Activated T-helper 1 cell treated with anti-CD3 and anti-CD28 coated beads, Interleukin-12 subunit alpha, Interleukin-12 subunit beta, Interleukin-2, Interleukin-4 antibody, amounts not matched to agents 30 ng/mL and 10 ng/mL and 1 ng/mL, durations not matched to agents 14 hours and 24 hours and 36 hours (primary cell): ENCODE measurements at regions of chr20 and their contacts with region 1.

Region 1: DNA sequence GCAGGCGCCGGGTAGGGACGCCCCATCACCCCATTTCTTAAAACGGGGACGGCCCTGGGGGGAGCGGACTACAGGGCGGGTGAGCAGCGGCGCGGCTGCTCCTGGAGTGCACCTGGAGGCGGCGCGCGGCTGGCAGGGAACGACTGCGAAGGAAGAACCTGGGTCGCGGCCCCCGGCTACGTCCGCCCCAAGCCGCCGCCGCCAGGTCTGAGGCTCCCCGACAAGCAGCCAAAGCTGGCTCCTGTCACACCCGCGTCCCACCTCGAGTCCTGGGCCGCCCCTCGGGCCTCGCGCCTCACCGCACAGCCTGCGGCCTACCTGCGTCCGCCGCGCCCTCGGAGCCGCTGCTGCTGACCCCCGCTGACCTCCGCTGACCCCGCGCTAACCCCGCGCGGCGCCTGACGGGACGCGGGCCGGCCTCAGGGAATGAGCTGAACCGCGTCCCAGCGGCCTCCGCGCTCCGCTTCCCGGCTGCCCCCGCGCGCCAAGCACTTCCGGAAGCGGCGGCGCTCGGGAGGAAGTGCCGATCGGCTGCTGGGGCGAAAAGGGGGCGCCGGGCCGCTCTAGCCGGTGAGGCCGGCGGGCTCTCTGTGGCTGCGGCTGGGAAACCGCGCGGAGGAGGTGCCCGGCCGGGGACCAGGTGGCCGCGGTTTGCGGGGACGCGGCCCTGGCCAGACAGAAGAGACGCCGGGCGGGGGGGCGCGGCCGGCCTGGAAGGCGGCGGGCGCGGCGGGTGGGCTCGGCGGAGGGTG is at the starts of genes ARFRP1 and ZGPAT:
- DNase-seq: peak; percentile 88
- H3K4me3 Mint-ChIP-seq: peak within 1 kb of the TSS; percentile 94
- H3K27ac Mint-ChIP-seq: peak within 1 kb of the TSS; percentile 86
- H3K4me1 Mint-ChIP-seq: peaks cover 31% of the 10 kb centered on the region
- H3K27me3 Mint-ChIP-seq: no peaks in the 10 kb centered on the region
- total RNA-seq, gene ARFRP1: 71.8 and 73.5 TPM in 2 replicates
- total RNA-seq, gene ZGPAT: 34.5 and 36.7 TPM in 2 replicates

Region 2: GRCh38 chr20:63657937-63658748 is 49.6 kb before region 1 on chr20 and contains the start of gene RTEL1:
- intact Hi-C with region 1: loop called (anchors 1 kb)
- DNase-seq: peak; percentile 87
- H3K4me3 Mint-ChIP-seq: peak within 1 kb of the TSS; percentile 94
- H3K27ac Mint-ChIP-seq: peak within 1 kb of the TSS; percentile 95
- H3K4me1 Mint-ChIP-seq: peaks cover 41% of the 10 kb centered on the region
- H3K27me3 Mint-ChIP-seq: peaks cover 7% of the 10 kb centered on the region
- total RNA-seq, gene RTEL1: 54.4 and 55.5 TPM in 2 replicates

Region 3: DNA sequence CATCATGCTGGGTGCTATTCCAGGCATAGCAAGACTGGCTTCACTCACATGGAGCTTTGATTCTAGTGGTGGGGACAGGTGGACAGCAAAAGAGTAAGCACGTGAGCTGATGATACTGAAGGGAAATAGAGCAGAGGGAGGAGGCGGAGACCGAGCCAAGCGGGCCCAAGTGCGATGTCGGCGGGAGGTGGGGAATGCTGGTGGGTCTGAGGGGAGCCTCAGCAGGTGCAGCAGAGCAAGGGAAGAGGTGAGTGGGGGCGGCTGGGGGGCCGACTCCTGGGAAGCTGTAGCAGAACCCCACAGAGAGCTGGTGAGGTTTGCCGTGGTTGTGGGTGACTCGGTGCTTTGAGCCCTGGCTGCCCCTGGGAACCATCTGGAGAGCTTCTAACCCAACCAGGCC is 39.4 kb before region 1 on chr20:
- intact Hi-C with region 1: no loop called
- DNase-seq: no peak
- H3K4me3 Mint-ChIP-seq: no peak overlapping the region
- H3K27ac Mint-ChIP-seq: no peak overlapping the region
- H3K4me1 Mint-ChIP-seq: no peaks in the 10 kb centered on the region
- H3K27me3 Mint-ChIP-seq: no peaks in the 10 kb centered on the region

Region 4: GRCh38 chr20:63734111-63734945 is 26.6 kb after region 1 on chr20:
- intact Hi-C with region 1: loop called (anchors 2 kb)
- DNase-seq: no peak
- H3K4me3 Mint-ChIP-seq: no peak overlapping the region
- H3K27ac Mint-ChIP-seq: no peak overlapping the region
- H3K4me1 Mint-ChIP-seq: peaks cover 25% of the 10 kb centered on the region
- H3K27me3 Mint-ChIP-seq: no peaks in the 10 kb centered on the region

Region 5: DNA sequence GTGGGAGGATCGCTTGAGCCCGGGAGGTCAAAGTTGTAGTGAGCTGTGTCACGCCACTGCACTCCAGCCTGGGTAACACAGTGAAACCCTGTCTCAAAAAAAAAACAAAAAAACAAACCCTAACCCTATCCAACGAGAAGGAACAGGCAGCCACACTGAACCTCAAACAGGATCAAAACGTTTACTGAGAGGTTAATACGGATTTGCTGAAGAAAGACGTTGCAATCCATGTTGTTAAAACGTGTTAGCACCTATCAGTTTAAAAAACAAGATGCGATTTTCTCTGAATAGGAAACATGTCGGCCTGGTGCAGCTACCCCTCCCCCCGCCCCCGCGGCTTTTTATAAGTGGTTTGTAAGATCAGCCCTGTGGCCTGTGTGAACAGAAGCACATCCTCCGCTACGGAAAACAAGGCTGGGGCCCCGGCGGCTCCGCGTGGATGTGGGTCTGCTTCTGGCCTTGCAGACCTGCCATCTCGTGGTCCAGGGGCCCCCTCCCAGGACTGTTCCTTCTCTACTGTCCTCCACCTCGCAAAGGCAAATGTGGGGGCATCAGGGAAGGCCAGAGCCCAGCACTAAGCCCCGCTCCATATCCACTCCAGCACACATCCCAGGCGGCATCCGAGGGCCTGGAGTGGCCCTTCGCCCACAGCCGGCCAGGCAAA is 43.2 kb after region 1 on chr20:
- intact Hi-C with region 1: loop called (anchors 1 kb)
- DNase-seq: no peak
- H3K4me3 Mint-ChIP-seq: peak overlapping the region; percentile 49
- H3K27ac Mint-ChIP-seq: peak overlapping the region; percentile 81
- H3K4me1 Mint-ChIP-seq: peaks cover 10% of the 10 kb centered on the region
- H3K27me3 Mint-ChIP-seq: peaks cover 4% of the 10 kb centered on the region

Region 6: DNA sequence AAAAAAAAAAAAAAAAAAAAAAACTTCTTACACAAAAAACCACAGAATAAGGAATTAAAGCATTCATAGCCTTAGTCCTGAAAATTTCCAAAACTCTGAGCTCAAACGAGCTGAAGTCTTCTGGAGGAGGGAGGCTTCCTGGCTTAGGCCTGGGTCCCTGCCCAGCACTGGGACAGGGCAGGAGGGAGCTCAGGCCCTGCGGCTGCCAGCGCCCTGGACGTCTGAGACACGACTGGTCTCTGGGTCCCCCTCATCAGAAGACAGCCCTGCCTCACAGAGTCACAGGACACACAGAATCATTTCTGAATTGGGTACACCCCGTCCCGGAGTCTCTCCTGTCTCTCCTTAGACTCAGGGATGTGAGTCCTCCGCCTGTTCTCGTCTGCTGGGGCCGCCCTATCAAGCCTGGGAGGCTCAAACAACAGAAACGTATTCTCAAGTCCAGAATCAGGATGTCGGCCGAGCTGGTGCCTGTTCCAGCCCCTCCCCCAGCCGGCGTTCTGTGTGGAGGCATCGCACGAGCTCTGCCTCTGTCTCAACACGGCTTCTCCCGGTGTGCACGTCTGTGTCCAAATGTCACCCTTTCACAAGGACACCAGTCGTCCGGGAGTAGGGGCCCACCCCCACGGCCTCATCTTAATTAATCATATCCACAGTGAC is 83.9 kb after region 1 on chr20:
- intact Hi-C with region 1: loop called (anchors 2 kb)
- DNase-seq: no peak
- H3K4me3 Mint-ChIP-seq: no peak overlapping the region
- H3K27ac Mint-ChIP-seq: no peak overlapping the region
- H3K4me1 Mint-ChIP-seq: no peaks in the 10 kb centered on the region
- H3K27me3 Mint-ChIP-seq: peaks cover 10% of the 10 kb centered on the region

Region 7: DNA sequence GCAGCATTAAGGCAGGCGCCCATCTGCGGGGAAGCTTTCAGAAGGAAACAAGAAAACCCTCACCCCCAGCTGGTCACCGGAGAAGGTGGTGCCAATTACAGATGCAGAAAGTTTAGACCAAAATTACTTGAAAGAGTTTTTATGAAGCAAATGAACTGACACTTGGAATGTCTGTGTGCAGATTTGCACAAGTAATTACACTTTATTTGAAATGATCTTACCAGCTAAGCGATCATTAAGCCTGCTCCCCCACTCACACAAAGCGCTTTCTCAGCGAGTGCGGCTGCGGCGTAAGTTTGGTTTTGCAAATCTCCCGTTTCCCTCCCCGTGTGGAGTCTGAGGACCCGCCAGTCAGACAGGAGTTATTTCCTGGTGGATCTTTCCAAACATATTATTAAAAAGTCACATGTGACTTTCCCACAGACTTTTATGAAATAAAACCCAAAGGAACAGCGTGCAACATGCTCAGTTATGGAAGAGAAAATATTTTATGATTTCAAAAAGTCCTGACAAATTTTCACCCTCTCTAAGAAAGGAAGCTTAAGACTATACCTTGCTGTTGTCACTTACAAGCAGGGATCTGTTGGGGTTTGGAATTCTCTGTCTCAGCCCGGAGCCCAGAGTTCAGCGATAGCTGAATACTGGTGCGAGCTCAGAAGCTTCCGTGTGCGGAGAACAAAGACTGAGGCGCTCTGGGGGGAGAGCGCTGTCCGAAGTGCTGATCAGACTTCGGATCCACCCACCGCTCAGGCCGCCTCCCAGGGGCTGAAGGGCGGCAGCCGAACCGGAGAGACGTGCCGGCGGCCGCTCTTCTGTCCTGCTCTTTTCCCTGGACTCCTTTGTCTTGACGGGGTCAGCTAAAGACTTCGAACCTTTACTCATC is 453.9 kb after region 1 on chr20:
- intact Hi-C with region 1: no loop called
- DNase-seq: peak; percentile 10
- H3K4me3 Mint-ChIP-seq: no peak overlapping the region
- H3K27ac Mint-ChIP-seq: no peak overlapping the region
- H3K4me1 Mint-ChIP-seq: no peaks in the 10 kb centered on the region
- H3K27me3 Mint-ChIP-seq: peaks cover 23% of the 10 kb centered on the region